ENCODE measurements at regions of chr5 and their contacts with region 1.

Region 1: GRCh38 chr5:172454358-172455086 is at the start of gene SH3PXD2B:
- DNase-seq: peak; percentile 54
- ATAC-seq: peak; percentile 64
- H3K4me3 ChIP-seq: peak within 1 kb of the TSS; percentile 72
- H3K27ac ChIP-seq: no peak within 1 kb of the TSS
- H3K4me1 ChIP-seq: peaks cover 34% of the 10 kb centered on the region
- H3K27me3 ChIP-seq: no peaks in the 10 kb centered on the region
- CTCF ChIP-seq: no peak
- total RNA-seq, gene SH3PXD2B: 8.9 and 9.8 TPM in 2 replicates

Region 2: DNA sequence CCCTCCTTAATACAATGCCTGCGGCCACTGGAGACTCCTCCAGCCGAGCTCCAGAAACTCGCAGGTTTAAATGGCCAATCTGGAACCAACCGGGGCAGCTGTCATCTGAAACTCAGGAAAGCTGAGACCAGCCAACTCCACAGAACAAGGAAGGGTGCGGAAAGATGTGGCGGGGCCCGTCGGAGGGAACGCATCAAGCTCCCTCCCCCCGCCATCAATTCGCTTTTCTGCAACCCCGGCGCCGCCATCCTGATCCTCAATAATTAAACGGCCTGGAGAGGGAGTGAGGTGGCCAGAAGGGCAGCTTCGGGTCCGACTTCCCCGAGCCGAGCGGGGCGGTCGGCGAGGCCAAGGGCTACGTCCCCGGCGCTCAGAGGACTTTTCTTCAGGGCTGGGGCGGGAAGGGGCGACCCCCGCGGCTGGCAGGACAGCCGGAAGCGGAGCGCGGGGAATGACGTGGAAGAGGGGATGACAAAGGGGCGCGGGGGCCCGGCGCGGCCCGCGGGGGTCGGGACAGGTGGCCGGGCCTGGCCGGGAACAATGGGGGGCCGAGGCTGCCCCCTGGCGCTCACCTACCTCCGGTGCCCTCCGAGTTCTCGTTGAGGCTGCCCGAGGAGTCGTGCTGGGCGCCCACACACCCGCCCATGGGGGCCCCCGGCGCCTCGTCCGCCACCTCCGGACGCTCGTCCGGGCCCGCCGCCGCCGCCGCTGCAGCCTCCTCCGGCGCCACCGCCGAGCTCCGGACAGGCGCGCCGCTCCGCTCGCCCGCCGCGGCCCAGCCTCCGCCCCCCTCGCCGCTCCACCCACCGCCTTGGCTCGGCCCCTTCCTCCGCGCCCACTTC is 171.3 kb before region 1 on chr5 and contains the start of gene UBTD2:
- CTCF ChIA-PET with region 1: no interaction called
- POLR2A ChIA-PET with region 1: no interaction called
- intact Hi-C with region 1: loop called (anchors 10 kb)
- DNase-seq: peak; percentile 74
- ATAC-seq: peak; percentile 75
- H3K4me3 ChIP-seq: peak within 1 kb of the TSS; percentile 97
- H3K27ac ChIP-seq: peak within 1 kb of the TSS; percentile 43
- H3K4me1 ChIP-seq: peaks cover 21% of the 10 kb centered on the region
- H3K27me3 ChIP-seq: no peaks in the 10 kb centered on the region
- CTCF ChIP-seq: peak; percentile 49; the same call in 1 of the 2 replicates
- total RNA-seq, gene UBTD2: 22.6 and 23.8 TPM in 2 replicates

Region 3: DNA sequence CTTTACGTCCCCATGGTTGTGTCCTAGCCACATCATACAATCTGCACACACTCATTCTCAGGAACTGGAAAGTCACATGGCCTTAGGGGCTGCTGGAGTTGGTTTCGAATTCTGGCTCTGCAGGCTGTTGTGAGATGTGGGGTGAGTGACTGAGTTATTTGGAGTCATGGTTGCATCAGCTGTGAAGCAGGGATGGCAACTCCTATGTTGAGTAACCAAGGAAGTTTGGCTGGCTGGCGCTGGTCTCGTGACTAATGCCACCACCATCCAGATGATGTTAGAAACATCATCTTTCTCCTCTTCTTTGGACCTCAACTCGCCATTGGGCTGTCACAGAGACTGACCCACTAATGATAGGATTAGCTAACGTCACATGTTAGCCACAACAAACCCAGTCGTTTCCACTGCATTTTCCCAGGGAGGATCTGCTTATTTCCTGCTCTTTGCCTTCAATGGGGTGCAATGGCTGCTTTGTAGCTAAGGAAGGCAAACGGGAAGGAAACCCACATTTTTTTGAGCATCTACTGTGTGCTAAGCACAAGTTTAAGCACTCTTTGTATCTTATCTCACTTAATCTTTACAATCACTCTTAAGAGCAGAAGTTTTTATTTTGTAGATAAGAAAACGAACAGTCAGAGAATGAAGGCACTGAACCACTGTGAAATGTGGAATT is 92.8 kb before region 1 on chr5:
- CTCF ChIA-PET with region 1: no interaction called
- POLR2A ChIA-PET with region 1: no interaction called
- intact Hi-C with region 1: loop called (anchors 5 kb)
- DNase-seq: peak; percentile 98
- ATAC-seq: peak; percentile 97
- H3K4me3 ChIP-seq: no peak overlapping the region
- H3K27ac ChIP-seq: peak overlapping the region; percentile 79
- H3K4me1 ChIP-seq: peaks cover 16% of the 10 kb centered on the region
- H3K27me3 ChIP-seq: no peaks in the 10 kb centered on the region
- CTCF ChIP-seq: no peak

Region 4: DNA sequence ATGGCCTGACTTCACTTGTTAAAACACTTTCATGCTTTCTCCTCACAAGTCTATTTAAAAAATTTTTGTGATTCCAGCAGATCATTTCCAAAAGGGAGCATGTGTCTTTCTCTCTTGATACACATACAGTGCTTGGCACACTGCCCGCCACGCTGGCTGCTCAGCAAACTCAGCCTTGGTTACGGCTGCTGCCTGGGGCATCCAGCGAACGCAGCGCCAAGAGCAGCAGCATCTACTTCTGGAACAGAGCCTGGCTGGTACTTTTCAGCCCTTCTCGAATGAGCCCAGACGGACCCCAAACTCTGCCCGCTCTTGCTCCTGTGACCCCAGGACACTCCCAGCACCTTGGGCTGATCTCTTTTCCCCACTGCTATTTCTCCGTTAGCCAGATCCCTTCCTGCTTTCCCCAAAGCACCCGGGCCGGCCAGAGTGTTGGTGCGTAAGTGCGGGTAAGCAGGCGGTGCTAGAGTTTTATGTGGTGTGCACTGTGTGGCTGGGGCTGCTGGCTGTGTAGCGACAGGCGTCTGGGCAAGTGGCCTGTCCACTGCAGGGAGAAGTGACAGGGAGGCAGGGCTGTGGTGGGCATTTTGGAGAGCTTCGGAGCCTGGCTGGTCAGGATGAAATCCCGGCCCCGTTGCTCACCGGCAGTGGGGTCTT is 73.4 kb before region 1 on chr5:
- CTCF ChIA-PET with region 1: no interaction called
- POLR2A ChIA-PET with region 1: no interaction called
- intact Hi-C with region 1: loop called (anchors 2 kb)
- DNase-seq: peak; percentile 82
- ATAC-seq: peak; percentile 20
- H3K4me3 ChIP-seq: peak overlapping the region; percentile 30; the same call in 1 of the 2 replicates
- H3K27ac ChIP-seq: peak overlapping the region; percentile 31
- H3K4me1 ChIP-seq: peaks cover 41% of the 10 kb centered on the region
- H3K27me3 ChIP-seq: no peaks in the 10 kb centered on the region
- CTCF ChIP-seq: no peak

Region 5: GRCh38 chr5:172411484-172412072 is 42.9 kb before region 1 on chr5:
- CTCF ChIA-PET with region 1: no interaction called
- POLR2A ChIA-PET with region 1: interaction called, 3 read pairs
- intact Hi-C with region 1: loop called (anchors 2 kb)
- DNase-seq: no peak
- ATAC-seq: no peak
- H3K4me3 ChIP-seq: no peak overlapping the region
- H3K27ac ChIP-seq: no peak overlapping the region
- H3K4me1 ChIP-seq: peaks cover 72% of the 10 kb centered on the region
- H3K27me3 ChIP-seq: no peaks in the 10 kb centered on the region
- CTCF ChIP-seq: no peak

Region 6: GRCh38 chr5:172603251-172603806 is 148.8 kb after region 1 on chr5:
- CTCF ChIA-PET with region 1: no interaction called
- POLR2A ChIA-PET with region 1: no interaction called
- intact Hi-C with region 1: no loop called
- DNase-seq: no peak
- ATAC-seq: no peak
- H3K4me3 ChIP-seq: no peak overlapping the region
- H3K27ac ChIP-seq: no peak overlapping the region
- H3K4me1 ChIP-seq: no peaks in the 10 kb centered on the region
- H3K27me3 ChIP-seq: peaks cover 49% of the 10 kb centered on the region
- CTCF ChIP-seq: no peak